Heart right ventricle (tissue), 16 donors: ENCODE measurements at regions of chr19 and their contacts with region 1.

Region 1: GRCh38 chr19:1652471-1653299 is at the start of gene TCF3:
- DNase-seq: peak; percentile 97 to 98
- ATAC-seq: peak; percentile 98 to 99 (median 98)
- H3K4me3 ChIP-seq: peak within 1 kb of the TSS; percentile 67 to 97 (median 88)
- H3K27ac ChIP-seq: peak within 1 kb of the TSS; percentile 99 to 100 (median 100)
- H3K4me1 ChIP-seq: peaks cover 0 to 25% (median 16%) of the 10 kb centered on the region in 9 donors
- H3K27me3 ChIP-seq: peaks cover 0 to 3% (median 0%) of the 10 kb centered on the region in 7 donors
- CTCF ChIP-seq: no peak
- total RNA-seq, gene TCF3: 12.4 to 29.2 (median 17.9) TPM

Region 2: GRCh38 chr19:1605236-1606137 is 47.2 kb before region 1 on chr19 and contains the start of gene UQCR11:
- intact Hi-C with region 1: loop called (anchors 1 to 10 kb)
- DNase-seq: peak; percentile 94 to 96
- ATAC-seq: peak; percentile 94 to 98 (median 97)
- H3K4me3 ChIP-seq: peak within 1 kb of the TSS; percentile 92 to 100 (median 96)
- H3K27ac ChIP-seq: peak within 1 kb of the TSS; percentile 88 to 100 (median 97)
- H3K4me1 ChIP-seq: peaks cover 12 to 49% (median 35%) of the 10 kb centered on the region in 9 donors
- H3K27me3 ChIP-seq: no peaks in the 10 kb centered on the region
- CTCF ChIP-seq: peak; percentile 20 to 76 (median 59)
- total RNA-seq, gene UQCR11: 569 to 1,132 (median 804) TPM

Region 3: DNA sequence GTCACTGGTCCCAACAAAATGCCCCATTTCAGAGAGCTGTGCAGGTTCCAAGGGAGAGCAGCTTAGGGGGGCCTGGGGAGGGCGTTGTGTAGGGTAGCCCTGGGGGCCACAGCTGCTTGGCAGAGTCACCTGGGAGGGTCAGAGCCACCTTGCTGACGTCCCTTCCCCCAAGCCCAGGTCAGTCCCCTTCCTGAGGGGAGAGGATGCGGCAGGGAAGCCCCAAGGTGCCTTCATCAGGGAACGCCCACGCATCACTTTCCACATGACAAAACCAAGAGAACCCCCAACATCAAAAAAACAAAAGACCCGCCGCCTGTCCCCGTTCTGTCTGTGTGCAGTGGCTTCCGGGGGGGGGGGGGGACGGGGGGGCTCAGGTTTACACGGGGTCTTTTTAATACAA is 42.1 kb before region 1 on chr19:
- intact Hi-C with region 1: loop called (anchors 1 to 10 kb)
- DNase-seq: no peak
- ATAC-seq: no peak
- H3K4me3 ChIP-seq: no peak overlapping the region
- H3K27ac ChIP-seq: no peak overlapping the region
- H3K4me1 ChIP-seq: peaks cover 0 to 25% (median 8%) of the 10 kb centered on the region in 9 donors
- H3K27me3 ChIP-seq: no peaks in the 10 kb centered on the region
- CTCF ChIP-seq: no peak

Region 4: DNA sequence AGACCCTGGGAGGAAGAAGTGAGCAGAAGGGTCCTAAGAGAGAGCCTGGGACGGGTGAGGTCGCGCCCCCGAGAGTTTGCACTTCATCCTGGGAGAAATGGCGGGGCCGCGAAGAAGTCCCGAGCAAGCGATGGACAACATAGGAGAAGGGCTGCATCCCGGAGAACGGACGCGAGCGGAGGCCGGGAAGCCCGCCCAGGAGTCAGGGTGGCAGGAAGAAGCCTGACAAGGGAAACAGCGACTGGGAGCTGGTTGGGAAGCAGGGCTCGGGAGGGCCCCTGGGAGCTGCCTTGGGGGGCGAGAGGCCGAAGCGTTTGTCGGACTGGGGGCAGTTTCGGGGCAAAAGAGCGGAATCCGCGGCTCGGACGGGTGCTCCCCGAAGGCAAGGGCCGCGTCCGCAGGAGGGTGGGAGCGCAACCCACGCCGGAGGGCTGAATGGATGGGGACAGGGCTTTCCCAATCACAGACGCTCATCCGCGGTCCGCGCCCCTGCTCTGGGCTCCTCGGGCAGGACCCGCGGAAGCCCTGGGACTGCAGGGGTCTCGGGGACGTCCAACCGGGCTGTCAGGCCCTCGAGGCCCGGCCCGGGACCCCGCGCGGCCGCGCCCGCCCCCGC is 232.1 kb after region 1 on chr19:
- intact Hi-C with region 1: no loop called
- DNase-seq: no peak
- ATAC-seq: peak in 2 of 8 donors; percentile 4 to 10
- H3K4me3 ChIP-seq: peak overlapping the region; percentile 87 to 100 (median 96)
- H3K27ac ChIP-seq: peak overlapping the region; percentile 89 to 99 (median 96)
- H3K4me1 ChIP-seq: peaks cover 27 to 66% (median 53%) of the 10 kb centered on the region in 9 donors
- H3K27me3 ChIP-seq: no peaks in the 10 kb centered on the region
- CTCF ChIP-seq: no peak